ENCODE measurements at regions of chr5 and their contacts with region 1.

Region 1: DNA sequence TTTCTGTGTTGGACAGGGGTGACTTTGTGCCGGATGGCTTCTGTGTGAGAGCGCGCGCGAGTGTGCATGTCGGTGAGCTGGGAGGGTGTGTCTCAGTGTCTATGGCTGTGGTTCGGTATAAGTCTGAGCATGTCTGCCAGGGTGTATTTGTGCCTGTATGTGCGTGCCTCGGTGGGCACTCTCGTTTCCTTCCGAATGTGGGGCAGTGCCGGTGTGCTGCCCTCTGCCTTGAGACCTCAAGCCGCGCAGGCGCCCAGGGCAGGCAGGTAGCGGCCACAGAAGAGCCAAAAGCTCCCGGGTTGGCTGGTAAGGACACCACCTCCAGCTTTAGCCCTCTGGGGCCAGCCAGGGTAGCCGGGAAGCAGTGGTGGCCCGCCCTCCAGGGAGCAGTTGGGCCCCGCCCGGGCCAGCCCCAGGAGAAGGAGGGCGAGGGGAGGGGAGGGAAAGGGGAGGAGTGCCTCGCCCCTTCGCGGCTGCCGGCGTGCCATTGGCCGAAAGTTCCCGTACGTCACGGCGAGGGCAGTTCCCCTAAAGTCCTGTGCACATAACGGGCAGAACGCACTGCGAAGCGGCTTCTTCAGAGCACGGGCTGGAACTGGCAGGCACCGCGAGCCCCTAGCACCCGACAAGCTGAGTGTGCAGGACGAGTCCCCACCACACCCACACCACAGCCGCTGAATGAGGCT is at the start of gene ADRB2:
- DNase-seq: peak; percentile 98
- ATAC-seq: peak; percentile 98
- H3K4me3 ChIP-seq: peak within 1 kb of the TSS; percentile 47 to 51
- H3K27ac ChIP-seq: peak within 1 kb of the TSS in 1 of 2 donors; percentile 59
- H3K4me1 ChIP-seq: peaks cover 0 to 3% of the 10 kb centered on the region in 2 donors
- H3K27me3 ChIP-seq: no peaks in the 10 kb centered on the region
- total RNA-seq, gene ADRB2: 2.2 to 4.5 TPM

Region 2: GRCh38 chr5:148740966-148741742 is 85.0 kb before region 1 on chr5:
- intact Hi-C with region 1: loop called in 1 of 2 experiments (anchors 5 kb)
- DNase-seq: no peak
- ATAC-seq: peak; percentile 76
- H3K4me3 ChIP-seq: no peak overlapping the region
- H3K27ac ChIP-seq: no peak overlapping the region
- H3K4me1 ChIP-seq: peaks cover 3 to 5% of the 10 kb centered on the region in 2 donors
- H3K27me3 ChIP-seq: no peaks in the 10 kb centered on the region

Region 3: GRCh38 chr5:148904440-148904839 is 78.2 kb after region 1 on chr5:
- intact Hi-C with region 1: loop called in 1 of 2 experiments (anchors 5 kb)
- DNase-seq: peak; percentile 76 to 83
- ATAC-seq: peak; percentile 81
- H3K4me3 ChIP-seq: no peak overlapping the region
- H3K27ac ChIP-seq: peak overlapping the region; percentile 84 to 94
- H3K4me1 ChIP-seq: peaks cover 2 to 7% of the 10 kb centered on the region in 2 donors
- H3K27me3 ChIP-seq: no peaks in the 10 kb centered on the region

Region 4: GRCh38 chr5:148966348-148966747 is 140.2 kb after region 1 on chr5:
- intact Hi-C with region 1: loop called (anchors 5 kb)
- DNase-seq: no peak
- ATAC-seq: no peak
- H3K4me3 ChIP-seq: no peak overlapping the region
- H3K27ac ChIP-seq: peak overlapping the region; percentile 78 to 86
- H3K4me1 ChIP-seq: peaks cover 4 to 5% of the 10 kb centered on the region in 2 donors
- H3K27me3 ChIP-seq: no peaks in the 10 kb centered on the region

Region 5: DNA sequence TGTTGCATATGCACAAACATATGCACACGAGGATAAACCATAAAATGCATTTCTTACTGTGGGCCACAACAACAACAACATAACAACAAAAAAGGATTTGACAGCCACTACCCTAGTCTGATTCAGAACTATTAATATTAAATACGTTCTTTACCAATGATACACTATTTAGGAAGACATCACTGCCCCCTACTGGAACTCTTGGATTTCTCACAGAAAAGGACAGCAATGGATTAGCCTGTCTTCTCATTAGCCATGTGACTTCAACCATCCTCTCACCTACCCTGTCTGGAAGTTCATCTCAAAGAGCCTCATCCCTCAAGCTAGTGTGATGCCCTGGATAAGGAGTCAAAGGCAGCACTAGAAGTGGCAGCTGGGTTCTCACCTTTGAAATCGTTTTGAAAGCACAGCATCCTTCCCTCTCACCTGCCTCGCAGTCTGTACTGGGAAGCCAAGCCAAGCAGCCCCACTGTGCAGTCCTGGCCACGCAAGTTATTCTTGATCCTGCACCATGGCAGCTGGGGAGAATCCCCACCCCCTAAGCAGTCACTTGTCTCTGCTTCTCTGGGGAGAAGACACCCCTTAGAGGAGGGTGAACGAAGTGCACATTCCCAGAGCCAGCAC is 172.1 kb after region 1 on chr5:
- intact Hi-C with region 1: loop called in 1 of 2 experiments (anchors 5 kb)
- DNase-seq: no peak
- ATAC-seq: peak; percentile 64
- H3K4me3 ChIP-seq: no peak overlapping the region
- H3K27ac ChIP-seq: no peak overlapping the region
- H3K4me1 ChIP-seq: peaks cover 0 to 1% of the 10 kb centered on the region in 2 donors
- H3K27me3 ChIP-seq: no peaks in the 10 kb centered on the region

Region 6: DNA sequence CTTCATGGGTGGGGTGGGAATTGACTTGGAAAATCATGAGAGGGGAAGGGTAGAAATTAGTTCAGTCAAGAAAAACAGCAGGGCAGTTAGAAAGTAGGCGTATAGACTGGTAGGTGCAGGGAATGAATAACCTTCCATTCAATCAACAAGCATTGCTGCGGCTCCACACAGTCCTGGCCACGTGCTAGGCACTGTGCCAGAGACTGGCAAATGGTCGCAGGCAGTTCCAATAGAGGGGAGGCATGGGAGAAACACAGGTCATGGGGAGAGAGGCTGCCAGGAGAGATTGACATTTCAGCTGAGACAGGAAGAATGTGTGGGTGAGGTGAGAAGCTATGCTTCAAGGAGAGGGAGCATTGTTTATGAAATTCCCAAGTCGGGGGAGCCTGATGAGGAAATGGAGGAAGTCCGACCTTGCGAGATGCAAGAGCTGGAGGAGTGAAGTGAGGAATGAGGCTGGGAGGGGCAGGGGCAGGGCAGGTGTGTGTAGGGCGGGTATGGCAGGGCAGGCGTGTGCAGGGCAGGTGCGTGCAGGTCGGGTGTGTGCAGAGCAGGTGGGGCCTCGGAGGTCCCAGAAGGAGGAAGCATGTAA is 849.5 kb after region 1 on chr5:
- intact Hi-C with region 1: no loop called
- DNase-seq: no peak
- ATAC-seq: peak; percentile 49
- H3K4me3 ChIP-seq: no peak overlapping the region
- H3K27ac ChIP-seq: no peak overlapping the region
- H3K4me1 ChIP-seq: no peaks in the 10 kb centered on the region
- H3K27me3 ChIP-seq: no peaks in the 10 kb centered on the region

Measured in aorta (tissue), 5 donors.